Activated CD4-positive, alpha-beta T cell treated with anti-CD3 and anti-CD28 coated beads, Interleukin-2, amount 10 ng/mL, durations not matched to agents 24 days and 14 days (primary cell): ENCODE measurements at regions of chr10 and their contacts with region 1.

Region 1: DNA sequence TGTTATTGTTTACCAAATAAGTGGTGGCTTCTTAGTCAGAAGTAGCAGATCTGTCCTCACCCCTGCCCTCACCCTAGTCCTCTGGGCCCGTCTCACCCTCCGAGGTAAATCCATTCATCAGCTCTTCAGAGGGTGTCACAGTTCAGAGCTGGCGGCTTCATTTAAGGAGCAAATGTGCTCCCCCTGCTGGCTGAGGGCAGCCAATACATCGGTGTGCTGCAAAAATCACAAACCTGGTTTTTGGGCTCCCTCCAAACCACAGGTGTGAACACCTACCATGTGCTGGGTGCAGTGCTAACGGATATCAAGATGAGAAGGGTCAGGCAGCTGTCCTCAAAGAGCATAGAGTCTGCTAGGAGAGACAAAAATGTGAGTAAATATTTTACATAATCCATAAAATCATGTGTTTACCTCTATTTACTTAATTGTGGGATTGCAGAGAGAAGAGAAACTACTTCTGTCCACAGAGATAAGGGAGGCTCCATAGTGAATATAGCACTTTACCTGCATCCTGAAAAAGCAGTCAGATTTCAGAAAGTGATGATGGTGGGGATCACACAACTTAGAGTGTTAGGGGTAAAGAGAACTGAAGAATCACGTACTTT is 15.5 kb upstream of the CRTAC1 start:
- DNase-seq: peak; percentile 88
- H3K4me3 Mint-ChIP-seq: no peak overlapping the region
- H3K27ac Mint-ChIP-seq: no peak overlapping the region
- H3K4me1 Mint-ChIP-seq: no peaks in the 10 kb centered on the region
- H3K27me3 Mint-ChIP-seq: peaks cover 23% of the 10 kb centered on the region

Region 2: DNA sequence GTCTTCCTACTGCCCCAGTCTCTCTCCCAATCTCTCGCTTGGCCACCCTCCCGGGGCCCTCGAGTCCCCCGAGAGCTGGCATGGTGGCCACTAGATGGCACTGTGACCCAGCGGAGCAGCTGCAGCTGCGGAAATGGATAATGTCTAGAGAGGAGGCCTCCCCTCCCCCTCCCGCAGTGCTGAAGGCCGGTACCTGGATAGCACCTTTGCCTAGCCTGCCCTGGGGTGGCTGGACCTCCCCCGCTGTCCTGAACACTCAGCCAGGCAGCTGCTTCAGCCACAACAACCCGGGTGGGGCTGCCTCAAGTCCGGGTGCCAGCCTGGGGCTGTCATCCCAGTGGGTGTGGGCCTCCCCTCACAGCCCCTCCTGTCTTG is 131.1 kb before region 1 on chr10:
- intact Hi-C with region 1: loop called (anchors 1 kb)
- DNase-seq: peak; percentile 91
- H3K4me3 Mint-ChIP-seq: no peak overlapping the region
- H3K27ac Mint-ChIP-seq: no peak overlapping the region
- H3K4me1 Mint-ChIP-seq: no peaks in the 10 kb centered on the region
- H3K27me3 Mint-ChIP-seq: peaks cover 12% of the 10 kb centered on the region